Activated naive CD4-positive, alpha-beta T cell treated with anti-CD3 and anti-CD28 coated beads for 36 hours (primary cell): ENCODE measurements at regions of chr4 and their contacts with region 1.

Region 1: GRCh38 chr4:99054428-99054994 is 34.1 kb downstream of the ADH5 start:
- DNase-seq: no peak
- H3K4me3 Mint-ChIP-seq: no peak overlapping the region
- H3K27ac Mint-ChIP-seq: peak overlapping the region; percentile 50
- H3K4me1 Mint-ChIP-seq: peaks cover 44% of the 10 kb centered on the region
- H3K27me3 Mint-ChIP-seq: no peaks in the 10 kb centered on the region

Region 2: DNA sequence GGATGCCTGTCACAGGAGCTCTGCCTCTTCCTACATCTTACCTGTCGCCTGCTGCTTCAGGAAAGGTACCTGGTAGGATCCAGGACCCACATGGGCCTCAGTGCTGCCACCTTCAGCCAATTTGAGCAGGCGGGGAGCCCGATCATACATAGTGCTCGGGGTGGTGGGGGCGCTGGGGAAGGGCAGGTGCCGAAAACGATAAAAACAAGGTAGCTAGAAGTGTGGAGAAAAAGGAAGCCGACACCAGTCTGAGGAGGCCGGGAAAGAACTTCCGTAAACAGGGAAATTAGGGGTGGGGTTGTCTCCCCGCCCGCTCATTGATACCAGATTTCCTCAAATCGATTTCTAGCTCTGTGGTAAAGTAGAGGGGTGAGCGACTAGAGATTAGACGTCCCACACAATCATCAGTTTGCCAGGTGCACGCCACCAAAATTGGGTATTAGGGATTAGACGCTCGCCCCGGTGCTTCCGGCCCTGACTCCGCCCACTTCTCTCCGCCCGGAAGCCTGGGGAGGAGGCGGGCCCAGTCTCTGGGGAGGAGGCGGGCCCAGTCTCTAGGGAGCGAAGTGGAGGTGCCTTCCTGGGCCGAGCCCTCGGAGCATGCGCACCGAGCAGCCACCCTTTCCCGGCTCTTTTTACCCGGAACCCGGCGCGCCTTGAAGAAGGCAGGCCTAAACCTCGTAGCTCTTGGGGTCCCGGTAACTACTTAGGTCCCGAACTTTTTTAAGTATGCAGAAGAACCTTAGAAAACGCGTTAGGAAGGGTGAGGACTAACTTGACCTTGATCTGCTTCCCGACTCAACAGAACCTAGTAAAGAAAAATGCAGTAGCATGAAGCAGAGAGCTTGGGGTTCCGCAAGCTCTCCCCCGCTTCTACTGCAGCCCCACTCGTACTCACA is 911.3 kb before region 1 on chr4 and contains the start of gene STPG2:
- CTCF ChIA-PET with region 1: interaction called, 3 read pairs
- intact Hi-C with region 1: loop called (anchors 1 kb)
- DNase-seq: peak; percentile 95
- H3K4me3 Mint-ChIP-seq: peak within 1 kb of the TSS; percentile 96
- H3K27ac Mint-ChIP-seq: peak within 1 kb of the TSS; percentile 99
- H3K4me1 Mint-ChIP-seq: peaks cover 19% of the 10 kb centered on the region
- H3K27me3 Mint-ChIP-seq: no peaks in the 10 kb centered on the region
- total RNA-seq, gene STPG2: not detected

Region 3: GRCh38 chr4:98181809-98182208 is 872.7 kb before region 1 on chr4:
- CTCF ChIA-PET with region 1: no interaction called
- intact Hi-C with region 1: no loop called
- DNase-seq: no peak
- H3K4me3 Mint-ChIP-seq: no peak overlapping the region
- H3K27ac Mint-ChIP-seq: no peak overlapping the region
- H3K4me1 Mint-ChIP-seq: no peaks in the 10 kb centered on the region
- H3K27me3 Mint-ChIP-seq: peaks cover 2% of the 10 kb centered on the region

Region 4: DNA sequence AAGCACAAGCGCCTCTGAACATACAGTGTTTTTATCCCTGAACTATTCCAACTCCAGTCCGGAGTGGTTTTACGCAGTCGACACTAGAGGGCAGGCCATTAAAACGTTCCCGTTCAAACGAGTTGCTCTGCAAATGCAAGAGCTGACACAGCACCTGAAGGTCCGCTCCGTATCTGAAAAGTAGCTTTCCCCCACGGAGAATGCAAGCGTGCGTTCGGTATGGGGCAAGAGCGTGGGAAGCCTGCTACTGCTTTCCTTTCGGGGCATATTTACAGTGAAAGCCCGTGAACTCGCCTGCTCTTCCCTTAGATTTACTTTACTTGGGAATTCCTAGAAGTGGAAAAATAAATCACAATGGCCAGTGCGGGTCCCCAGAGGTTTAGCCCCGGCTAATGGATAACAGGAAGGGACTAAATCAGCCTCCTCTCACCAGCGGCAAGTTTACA is 586.9 kb before region 1 on chr4:
- CTCF ChIA-PET with region 1: interaction called, 11 read pairs
- intact Hi-C with region 1: loop called (anchors 2 kb)
- DNase-seq: peak; percentile 85
- H3K4me3 Mint-ChIP-seq: peak overlapping the region; percentile 65
- H3K27ac Mint-ChIP-seq: no peak overlapping the region
- H3K4me1 Mint-ChIP-seq: peaks cover 16% of the 10 kb centered on the region
- H3K27me3 Mint-ChIP-seq: no peaks in the 10 kb centered on the region

Region 5: DNA sequence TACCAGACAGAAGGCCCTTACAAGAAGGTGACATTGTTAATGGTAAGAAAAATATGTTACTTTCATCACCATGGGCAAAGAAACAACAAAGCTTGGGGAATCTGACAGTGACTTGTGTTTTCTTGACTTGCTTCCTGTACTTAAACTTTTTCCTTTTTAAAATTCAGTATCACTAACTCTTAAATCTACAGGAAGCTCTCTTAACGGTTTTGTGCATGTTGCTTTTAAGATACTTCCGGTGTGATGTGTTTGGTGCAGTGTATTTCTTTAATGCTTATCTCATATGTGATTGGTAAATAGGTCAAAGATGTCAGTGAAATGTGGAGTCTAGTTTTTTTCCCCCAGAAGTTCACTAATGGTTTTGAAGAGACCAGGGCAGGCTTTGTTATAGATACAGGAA is 11.2 kb before region 1 on chr4:
- CTCF ChIA-PET with region 1: interaction called, 11 read pairs
- intact Hi-C with region 1: loop called (anchors 1 kb)
- DNase-seq: no peak
- H3K4me3 Mint-ChIP-seq: no peak overlapping the region
- H3K27ac Mint-ChIP-seq: peak overlapping the region; percentile 82
- H3K4me1 Mint-ChIP-seq: peaks cover 16% of the 10 kb centered on the region
- H3K27me3 Mint-ChIP-seq: no peaks in the 10 kb centered on the region

Region 6: GRCh38 chr4:99405433-99406115 is 351.1 kb after region 1 on chr4:
- CTCF ChIA-PET with region 1: interaction called, 4 read pairs
- intact Hi-C with region 1: loop called (anchors 1 kb)
- DNase-seq: peak; percentile 77
- H3K4me3 Mint-ChIP-seq: no peak overlapping the region
- H3K27ac Mint-ChIP-seq: no peak overlapping the region
- H3K4me1 Mint-ChIP-seq: no peaks in the 10 kb centered on the region
- H3K27me3 Mint-ChIP-seq: no peaks in the 10 kb centered on the region